Posterior cingulate gyrus (tissue), 11 donors: ENCODE measurements at regions of chr11 and their contacts with region 1.

Region 1: DNA sequence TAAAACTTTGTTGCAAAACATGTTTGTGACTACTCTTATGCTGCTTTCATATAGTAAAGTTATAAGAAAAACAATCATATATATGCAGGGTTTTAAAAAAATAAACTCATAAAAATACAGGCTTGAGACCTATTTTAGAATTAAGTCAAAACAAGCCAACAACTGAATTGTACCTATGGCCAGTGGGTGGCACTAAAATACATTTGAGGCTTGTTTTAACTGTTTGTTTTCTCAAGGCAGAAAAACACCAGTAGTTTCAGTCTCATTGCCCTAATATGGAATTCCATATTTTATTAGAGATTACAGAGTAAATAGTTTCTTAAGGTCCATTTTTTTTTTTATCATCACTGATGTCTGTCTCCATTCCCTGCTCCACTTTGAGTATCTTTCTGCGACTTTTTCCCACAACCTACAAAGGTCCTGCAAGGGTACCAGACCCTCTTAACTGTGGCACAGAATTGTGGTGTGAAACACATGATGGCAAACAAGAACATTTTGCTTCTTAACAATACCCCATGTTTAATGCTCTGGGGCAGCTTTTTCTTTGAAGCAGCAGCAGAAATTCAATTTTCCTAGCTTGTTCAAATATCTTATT is 8.5 kb upstream of the CCDC89 start:
- DNase-seq: peak in 1 of 10 donors; percentile 20

Region 2: GRCh38 chr11:85826116-85826855 is 131.8 kb after region 1 on chr11:
- intact Hi-C with region 1: loop called (anchors 5 kb)
- DNase-seq: peak in 7 of 10 donors; percentile 48 to 91 (median 58)

Region 3: GRCh38 chr11:85941380-85941973 is 247.0 kb after region 1 on chr11:
- intact Hi-C with region 1: no loop called
- DNase-seq: peak in 8 of 10 donors; percentile 27 to 94 (median 59)